Aorta (tissue), 5 donors: ENCODE measurements at regions of chr6 and their contacts with region 1.

Region 1: DNA sequence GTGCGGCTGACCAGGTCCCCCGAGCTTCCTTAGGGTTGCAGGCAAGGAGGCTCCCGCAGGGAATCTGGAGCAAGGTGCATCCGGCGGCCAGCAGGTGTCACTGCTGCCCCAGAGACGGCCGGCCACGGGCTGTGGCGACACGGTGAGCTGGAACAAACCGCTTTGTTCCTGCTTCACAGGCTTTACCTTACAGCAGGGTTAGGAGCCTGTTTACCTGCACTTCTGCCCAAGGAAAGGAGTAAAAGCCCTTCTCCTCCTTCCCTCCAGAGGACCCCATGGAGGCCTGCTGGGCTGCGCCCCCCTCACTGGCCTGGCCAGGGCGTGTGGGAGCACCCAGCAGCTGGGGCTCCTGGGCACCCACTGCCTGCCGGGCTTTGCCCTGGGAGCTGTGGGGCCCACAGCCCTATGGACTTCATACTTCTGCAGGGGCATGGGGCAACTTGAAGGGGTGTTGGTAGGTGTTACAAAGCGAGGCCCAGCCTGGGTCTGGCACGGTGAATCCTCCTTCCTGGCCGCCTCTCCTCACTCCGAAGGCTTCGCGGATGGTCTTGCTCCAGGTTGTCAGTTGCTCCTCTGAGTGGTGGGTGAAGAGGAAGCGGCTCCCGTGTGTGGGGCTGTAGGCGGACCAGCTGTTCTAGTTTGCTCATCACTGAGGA is 88.4 kb downstream of the CDC5L start:
- DNase-seq: peak; percentile 79 to 92
- ATAC-seq: peak; percentile 87
- H3K4me3 ChIP-seq: no peak overlapping the region
- H3K27ac ChIP-seq: no peak overlapping the region
- H3K4me1 ChIP-seq: no peaks in the 10 kb centered on the region
- H3K27me3 ChIP-seq: no peaks in the 10 kb centered on the region

Region 2: DNA sequence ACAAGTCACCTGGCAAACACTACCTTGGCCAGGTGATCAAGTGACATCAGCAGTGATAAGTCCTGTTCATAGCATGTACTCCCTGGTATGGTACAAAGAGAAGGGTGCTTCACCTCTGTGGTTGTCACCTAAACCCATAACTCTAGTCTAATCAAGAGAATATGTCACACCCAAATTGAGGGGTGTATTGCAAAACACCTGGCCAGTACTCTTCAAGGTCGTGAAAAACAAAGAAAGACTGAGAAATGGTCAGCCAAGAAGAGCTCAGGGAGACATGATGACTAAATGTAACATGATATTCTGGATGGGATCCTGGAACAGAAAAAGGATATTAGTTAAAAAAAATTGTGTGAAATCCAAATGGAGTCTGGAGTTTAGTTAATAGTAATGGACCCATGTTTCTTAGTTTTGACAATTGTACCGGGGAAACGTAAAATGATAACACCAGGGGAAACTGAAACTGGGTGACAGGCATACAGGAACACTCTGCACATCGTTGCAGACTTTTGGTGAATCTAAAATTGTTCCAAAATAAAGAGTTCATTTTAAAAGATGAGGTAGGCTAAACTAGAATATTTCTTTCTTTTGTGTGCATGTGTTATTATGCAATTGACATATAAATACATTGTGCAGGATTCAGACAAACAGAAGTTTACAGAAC is 173.6 kb after region 1 on chr6:
- intact Hi-C with region 1: loop called (anchors 5 to 10 kb)
- DNase-seq: no peak
- ATAC-seq: peak; percentile 20
- H3K4me3 ChIP-seq: no peak overlapping the region
- H3K27ac ChIP-seq: no peak overlapping the region
- H3K4me1 ChIP-seq: no peaks in the 10 kb centered on the region
- H3K27me3 ChIP-seq: no peaks in the 10 kb centered on the region

Region 3: DNA sequence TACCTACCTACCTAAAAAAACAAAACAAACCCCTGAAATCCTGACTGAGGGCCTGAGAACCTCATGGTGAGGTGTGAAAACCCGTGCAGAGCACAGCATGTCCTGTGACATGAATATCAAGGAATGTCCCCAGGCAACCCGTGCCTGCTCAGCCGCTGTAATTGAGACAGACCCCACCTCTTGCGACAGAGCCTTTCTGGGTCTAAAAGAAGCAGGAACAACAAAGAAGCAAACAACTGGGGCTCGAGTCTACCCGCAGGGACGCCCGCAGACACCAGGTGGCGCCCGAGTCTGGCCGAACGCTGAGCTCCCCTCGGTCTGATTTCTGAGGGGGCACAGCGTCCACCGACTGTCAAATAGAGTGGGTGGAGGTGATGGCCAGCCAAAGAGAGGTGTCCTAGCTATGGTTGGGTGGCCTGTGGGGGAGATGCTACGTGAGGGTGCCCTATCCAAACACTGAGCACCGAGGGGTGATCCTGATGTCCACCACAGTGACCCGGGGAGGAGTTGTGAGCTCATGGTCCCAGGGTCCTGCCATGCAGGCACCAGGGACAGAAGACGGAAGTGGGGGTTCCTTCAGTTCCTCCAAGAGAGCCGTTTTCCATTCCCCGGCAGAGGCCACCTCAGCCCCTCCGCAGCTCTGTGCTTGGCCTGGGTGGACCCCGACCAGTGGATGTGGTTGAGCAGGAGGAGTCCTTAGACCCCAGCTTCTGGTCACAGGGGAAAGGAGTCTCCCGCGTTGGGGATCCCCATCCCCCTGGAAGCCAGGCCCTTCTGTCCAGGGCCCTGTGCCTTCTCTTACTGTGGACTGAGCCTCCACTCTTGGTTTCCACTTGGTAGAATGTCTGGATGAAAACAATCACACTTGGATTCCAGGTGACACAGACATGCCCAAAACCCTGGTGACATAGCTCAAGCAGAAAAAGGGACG is 179.8 kb after region 1 on chr6:
- intact Hi-C with region 1: loop called (anchors 5 to 10 kb)
- DNase-seq: peak; percentile 83 to 90
- ATAC-seq: peak; percentile 75
- H3K4me3 ChIP-seq: no peak overlapping the region
- H3K27ac ChIP-seq: no peak overlapping the region
- H3K4me1 ChIP-seq: no peaks in the 10 kb centered on the region
- H3K27me3 ChIP-seq: no peaks in the 10 kb centered on the region

Region 4: DNA sequence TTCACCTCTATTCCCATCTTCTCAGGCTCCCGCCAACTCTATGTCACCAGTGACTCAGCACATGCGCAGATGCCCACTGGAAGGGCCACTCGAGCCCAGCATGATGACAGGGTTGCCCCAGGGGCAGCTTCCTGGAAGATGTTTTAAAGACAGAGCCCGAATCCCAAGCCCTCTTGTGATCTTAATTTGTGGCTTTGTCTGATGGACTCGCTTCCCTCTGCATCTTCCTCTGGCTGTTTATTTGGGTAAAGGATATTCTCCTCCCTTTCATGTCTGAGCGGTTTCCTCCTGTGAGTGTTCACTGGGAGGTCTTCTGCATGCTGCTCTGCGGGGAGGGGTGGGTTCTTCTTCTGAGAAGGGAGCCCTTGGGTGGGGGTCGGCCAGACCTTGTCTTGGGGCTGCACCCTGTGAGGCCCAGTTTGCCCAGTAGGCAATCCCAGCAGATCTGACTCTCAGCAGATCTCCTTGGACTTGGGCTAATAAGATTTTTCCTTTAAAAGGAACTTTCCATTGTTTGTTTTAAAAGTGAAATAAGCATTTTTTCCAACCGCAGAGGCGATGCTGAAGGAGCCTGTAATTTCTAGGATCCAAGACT is 312.6 kb after region 1 on chr6:
- intact Hi-C with region 1: loop called in 1 of 2 experiments (anchors 10 kb)
- DNase-seq: no peak
- ATAC-seq: no peak
- H3K4me3 ChIP-seq: no peak overlapping the region
- H3K27ac ChIP-seq: no peak overlapping the region
- H3K4me1 ChIP-seq: no peaks in the 10 kb centered on the region
- H3K27me3 ChIP-seq: no peaks in the 10 kb centered on the region

Region 5: DNA sequence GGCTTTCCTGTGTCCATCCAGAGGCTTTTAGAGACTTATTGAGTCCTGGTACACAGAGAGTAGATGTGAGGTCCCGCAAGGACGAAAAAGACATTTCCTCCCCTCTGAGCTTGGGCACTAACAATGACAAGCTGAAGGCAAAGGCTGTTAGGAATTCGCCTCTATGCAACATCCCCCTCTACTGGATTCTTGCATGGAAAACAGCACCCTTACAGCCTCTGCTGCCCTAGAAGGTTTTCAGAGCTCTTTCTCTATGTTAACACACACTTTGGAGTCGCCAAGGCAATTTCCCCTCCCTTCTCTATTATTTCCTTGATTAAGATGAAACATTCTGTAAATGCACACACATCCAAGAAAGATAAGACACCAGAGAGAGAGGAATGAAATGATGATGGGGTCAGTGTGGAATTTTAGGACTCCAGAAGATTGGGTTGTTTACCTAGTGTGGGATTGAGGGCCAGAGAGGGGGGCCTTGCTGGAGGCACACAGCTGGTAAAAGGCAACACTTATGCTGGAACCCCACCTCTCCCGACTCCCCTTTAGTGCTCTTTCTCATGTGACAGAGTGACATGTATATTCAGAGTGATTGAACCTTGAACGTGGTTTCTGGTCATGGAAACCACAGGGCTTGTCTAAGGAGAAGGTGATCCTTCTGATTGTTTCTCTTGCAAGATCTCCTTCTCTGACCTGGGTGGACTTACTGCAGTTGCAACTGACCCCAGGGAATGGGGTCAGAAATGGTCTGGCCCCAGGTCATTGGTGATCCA is 1239.0 kb after region 1 on chr6:
- intact Hi-C with region 1: loop called (anchors 2 kb)
- DNase-seq: no peak
- ATAC-seq: peak; percentile 86
- H3K4me3 ChIP-seq: no peak overlapping the region
- H3K27ac ChIP-seq: no peak overlapping the region
- H3K4me1 ChIP-seq: no peaks in the 10 kb centered on the region
- H3K27me3 ChIP-seq: no peaks in the 10 kb centered on the region